BJ (cell line): ENCODE measurements at regions of chr12 and their contacts with region 1.

Region 1: GRCh38 chr12:121550974-121551634 is 29.7 kb downstream of the KDM2B start:
- DNase-seq: no peak
- H3K4me3 ChIP-seq: no peak overlapping the region
- H3K27me3 ChIP-seq: no peaks in the 10 kb centered on the region
- CTCF ChIP-seq: no peak

Region 2: GRCh38 chr12:121536899-121537813 is 13.9 kb before region 1 on chr12:
- CTCF ChIA-PET with region 1: interaction called, 15 read pairs
- POLR2A ChIA-PET with region 1: no interaction called
- DNase-seq: no peak
- H3K4me3 ChIP-seq: peak overlapping the region; percentile 43
- H3K27me3 ChIP-seq: no peaks in the 10 kb centered on the region
- CTCF ChIP-seq: no peak

Region 3: GRCh38 chr12:121579981-121580868 is 29.1 kb after region 1 on chr12:
- CTCF ChIA-PET with region 1: interaction called, 26 read pairs
- POLR2A ChIA-PET with region 1: interaction called, 3 read pairs
- DNase-seq: no peak
- H3K4me3 ChIP-seq: peak overlapping the region; percentile 57
- H3K27me3 ChIP-seq: no peaks in the 10 kb centered on the region
- CTCF ChIP-seq: no peak

Region 4: DNA sequence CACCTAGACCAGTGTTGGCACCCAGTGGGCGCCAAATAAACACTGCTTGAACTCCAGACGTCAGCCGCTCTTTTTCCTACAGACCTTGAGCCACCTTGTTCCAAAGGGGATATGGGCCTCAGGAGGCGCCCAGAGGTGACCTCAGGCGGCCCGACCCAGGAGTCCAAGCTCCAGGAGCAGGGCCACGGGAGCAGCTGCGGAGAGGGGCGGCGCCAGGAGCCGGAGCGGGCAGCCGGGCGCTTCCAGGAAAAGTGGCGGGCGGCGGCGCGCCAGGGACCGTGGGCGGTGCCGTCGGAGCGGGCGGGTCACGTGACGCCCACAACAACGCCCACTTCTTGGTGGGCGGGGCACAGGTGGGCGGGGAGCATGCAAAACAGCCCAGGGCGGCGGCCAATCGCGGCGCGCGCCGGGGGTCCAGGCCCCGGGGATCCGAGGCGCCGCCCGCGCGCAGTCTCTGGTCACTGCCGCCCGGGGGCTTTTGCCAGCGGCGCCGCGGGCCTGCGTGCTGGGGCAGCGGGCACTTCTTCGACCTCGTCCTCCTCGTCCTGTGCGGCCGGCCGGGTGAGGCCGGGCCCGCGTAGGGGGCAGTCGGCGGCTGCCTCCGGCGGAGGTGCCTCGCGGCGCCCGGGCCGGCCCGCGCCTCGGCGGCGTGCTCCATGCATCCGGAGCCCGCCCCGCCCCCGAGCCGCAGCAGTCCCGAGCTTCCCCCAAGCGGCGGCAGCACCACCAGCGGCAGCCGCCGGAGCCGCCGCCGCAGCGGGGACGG is 75.2 kb after region 1 on chr12 and contains the start of gene ORAI1:
- CTCF ChIA-PET with region 1: interaction called, 75 read pairs
- POLR2A ChIA-PET with region 1: no interaction called
- DNase-seq: peak; percentile 54
- H3K4me3 ChIP-seq: peak within 1 kb of the TSS; percentile 59
- H3K27me3 ChIP-seq: no peaks in the 10 kb centered on the region
- CTCF ChIP-seq: 0 out of 2 replicates have a peak, but pooled peaks have one; percentile 2
- polyA plus RNA-seq, gene ORAI1: 20.3 and 28.3 TPM in 2 replicates

Region 5: DNA sequence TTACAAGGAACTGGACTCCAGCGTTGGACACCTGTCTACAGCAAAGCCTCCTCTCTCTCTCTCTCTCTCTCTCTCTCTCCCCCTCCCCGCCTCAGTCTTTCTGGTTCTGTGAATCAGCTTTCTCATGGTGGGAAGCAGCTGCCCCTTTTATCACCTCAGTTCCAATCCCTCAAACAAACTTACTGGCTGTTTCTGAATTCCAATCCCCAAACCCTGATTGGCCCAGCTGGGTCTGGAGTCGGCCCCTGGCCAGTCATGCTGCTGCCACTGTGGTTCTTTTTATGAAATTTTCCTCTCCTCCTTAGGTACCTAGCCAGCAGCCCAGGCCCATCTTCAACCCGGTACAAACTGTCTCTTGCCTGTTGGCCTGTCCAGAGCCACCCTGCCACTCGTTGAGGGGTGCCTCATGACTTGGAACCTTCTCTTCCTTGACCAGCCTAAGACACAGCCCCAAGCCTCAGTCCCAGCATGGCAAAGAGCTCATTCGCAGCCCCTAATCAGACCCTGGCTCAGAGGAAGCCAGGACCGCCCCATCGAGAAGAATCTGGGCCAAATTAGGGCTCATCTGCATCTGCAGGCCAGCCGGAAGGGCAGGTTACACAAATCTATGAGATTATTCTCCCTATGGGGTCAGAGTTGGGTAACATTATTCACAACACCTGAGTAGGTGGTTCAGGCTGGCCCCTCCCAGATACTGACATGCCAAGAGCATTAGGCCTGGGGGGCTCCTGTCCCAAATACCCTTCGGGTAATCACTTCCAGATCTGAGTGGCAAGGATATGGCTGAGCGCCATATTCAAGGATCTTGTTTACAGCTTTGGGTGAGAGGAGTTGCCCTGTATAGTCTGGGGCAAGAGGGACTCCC is 127.8 kb after region 1 on chr12:
- CTCF ChIA-PET with region 1: interaction called, 22 read pairs
- POLR2A ChIA-PET with region 1: no interaction called
- DNase-seq: no peak
- H3K4me3 ChIP-seq: no peak overlapping the region
- H3K27me3 ChIP-seq: no peaks in the 10 kb centered on the region
- CTCF ChIP-seq: no peak